ENCODE measurements at regions of chr17 and their contacts with region 1.

Region 1: DNA sequence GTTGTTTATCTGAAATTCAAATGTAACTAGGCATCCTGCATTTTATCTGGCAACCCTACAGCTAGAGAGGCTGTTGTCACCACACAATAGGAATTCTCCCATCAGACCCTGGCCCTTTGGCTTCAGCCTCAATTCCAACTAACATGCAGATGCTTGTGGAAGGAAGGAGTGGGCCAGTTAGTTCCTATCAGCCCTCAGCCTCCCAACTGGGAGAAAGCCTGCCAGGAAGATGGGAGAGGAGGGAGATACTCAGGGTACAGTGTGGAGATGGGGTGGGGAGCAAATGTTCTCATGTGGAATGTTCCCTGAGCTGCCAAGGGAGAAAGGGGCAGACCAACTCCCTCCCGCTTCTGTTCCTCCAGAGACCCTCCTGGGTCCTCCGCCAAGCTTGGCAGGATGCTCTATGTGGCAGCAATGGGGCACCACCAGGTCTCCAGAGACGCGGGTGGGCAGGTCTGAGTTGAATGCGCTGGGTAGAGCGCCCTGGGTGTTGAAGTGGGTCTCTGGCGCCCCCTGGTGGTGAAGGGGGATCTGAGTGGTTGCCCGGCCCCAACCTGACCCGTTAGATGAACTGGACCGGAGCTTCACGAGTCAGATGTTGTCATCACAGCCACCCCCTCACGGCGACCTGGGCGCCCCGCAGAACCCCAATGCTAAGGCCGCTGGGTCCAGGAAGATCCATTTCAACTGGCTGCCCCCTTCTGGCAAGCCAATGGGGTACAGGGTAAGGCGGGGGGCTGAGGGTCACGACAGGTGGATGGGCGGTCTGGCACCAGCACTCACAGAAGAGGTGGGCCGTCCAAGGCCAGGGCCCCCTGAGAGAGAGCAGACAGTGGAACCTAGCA is 15.2 kb downstream of the GALK1 start:
- DNase-seq: peak; percentile 59 to 91 (median 83)
- ATAC-seq: peak; percentile 60 to 70 (median 60)
- H3K4me3 ChIP-seq: no peak overlapping the region
- H3K4me3 Mint-ChIP-seq: no peak overlapping the region
- H3K27ac ChIP-seq: no peak overlapping the region
- H3K27ac Mint-ChIP-seq: no peak overlapping the region
- H3K4me1 ChIP-seq: peaks cover 0 to 34% of the 10 kb centered on the region in 2 experiments
- H3K4me1 Mint-ChIP-seq: peaks cover 16 to 21% (median 18%) of the 10 kb centered on the region in 3 donors
- H3K27me3 ChIP-seq: peaks cover 0 to 4% of the 10 kb centered on the region in 2 experiments
- H3K27me3 Mint-ChIP-seq: peaks cover 0 to 3% of the 10 kb centered on the region in 2 donors

Region 2: DNA sequence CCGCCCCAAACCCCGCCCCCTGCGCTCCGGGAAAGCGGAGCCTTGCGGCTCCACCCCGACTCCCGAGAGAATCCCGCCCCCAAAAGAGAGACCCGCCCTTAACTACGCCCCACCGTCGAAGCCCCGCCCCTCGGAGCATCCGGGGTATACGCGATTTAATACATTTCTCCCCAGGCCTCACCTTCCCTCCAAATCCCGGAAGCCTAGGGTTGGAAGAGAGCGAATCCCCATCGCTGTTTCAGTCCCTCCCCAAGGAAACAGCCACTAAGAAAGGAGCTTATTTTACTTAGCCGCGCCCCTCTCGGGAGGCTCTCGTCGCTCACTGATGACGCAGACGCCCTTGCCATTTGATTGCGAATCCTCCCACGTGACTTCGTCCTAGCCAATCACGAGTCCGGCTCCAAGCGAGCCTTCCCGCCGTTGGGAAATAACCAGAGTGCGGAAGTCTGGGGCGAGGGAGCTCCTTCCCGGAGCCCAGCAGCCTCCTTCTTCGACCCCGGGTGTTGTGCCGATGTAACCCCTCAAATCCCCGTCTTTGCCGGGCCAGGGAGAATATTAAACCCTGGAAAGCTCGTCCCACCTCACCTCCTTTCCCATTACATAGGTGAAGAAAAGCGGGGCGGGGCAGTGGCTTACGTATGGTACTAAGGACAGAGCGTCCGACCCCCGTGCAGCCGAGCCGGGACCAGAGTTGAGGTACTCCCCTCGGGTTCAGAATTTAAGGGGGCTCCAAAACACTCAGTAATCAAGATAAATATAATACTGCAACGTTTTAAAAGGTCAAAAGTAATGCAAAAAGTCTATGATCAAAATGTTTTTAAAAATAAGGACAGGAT is 876.5 kb before region 1 on chr17:
- CTCF ChIA-PET with region 1: interaction called in 1 of 2 experiments, 12 read pairs
- POLR2A ChIA-PET with region 1: no interaction called
- DNase-seq: peak; percentile 96 to 100 (median 99)
- ATAC-seq: peak; percentile 93 to 94 (median 94)
- H3K4me3 ChIP-seq: peak overlapping the region; percentile 76 to 91
- H3K4me3 Mint-ChIP-seq: peak overlapping the region; percentile 80 to 92 (median 88)
- H3K27ac ChIP-seq: peak overlapping the region; percentile 89
- H3K27ac Mint-ChIP-seq: peak overlapping the region; percentile 95 to 97
- H3K4me1 ChIP-seq: peaks cover 4 to 21% of the 10 kb centered on the region in 2 experiments
- H3K4me1 Mint-ChIP-seq: peaks cover 16 to 30% (median 23%) of the 10 kb centered on the region in 3 donors
- H3K27me3 ChIP-seq: peaks cover 0 to 5% of the 10 kb centered on the region in 2 experiments
- H3K27me3 Mint-ChIP-seq: no peaks in the 10 kb centered on the region

Region 3: GRCh38 chr17:75159191-75160031 is 590.4 kb before region 1 on chr17:
- CTCF ChIA-PET with region 1: no interaction called
- POLR2A ChIA-PET with region 1: no interaction called
- DNase-seq: no peak
- ATAC-seq: no peak
- H3K4me3 ChIP-seq: no peak overlapping the region
- H3K4me3 Mint-ChIP-seq: no peak overlapping the region
- H3K27ac ChIP-seq: no peak overlapping the region
- H3K27ac Mint-ChIP-seq: no peak overlapping the region
- H3K4me1 ChIP-seq: peaks cover 7 to 11% of the 10 kb centered on the region in 2 experiments
- H3K4me1 Mint-ChIP-seq: peaks cover 10 to 15% (median 15%) of the 10 kb centered on the region in 3 donors
- H3K27me3 ChIP-seq: no peaks in the 10 kb centered on the region
- H3K27me3 Mint-ChIP-seq: no peaks in the 10 kb centered on the region

Region 4: DNA sequence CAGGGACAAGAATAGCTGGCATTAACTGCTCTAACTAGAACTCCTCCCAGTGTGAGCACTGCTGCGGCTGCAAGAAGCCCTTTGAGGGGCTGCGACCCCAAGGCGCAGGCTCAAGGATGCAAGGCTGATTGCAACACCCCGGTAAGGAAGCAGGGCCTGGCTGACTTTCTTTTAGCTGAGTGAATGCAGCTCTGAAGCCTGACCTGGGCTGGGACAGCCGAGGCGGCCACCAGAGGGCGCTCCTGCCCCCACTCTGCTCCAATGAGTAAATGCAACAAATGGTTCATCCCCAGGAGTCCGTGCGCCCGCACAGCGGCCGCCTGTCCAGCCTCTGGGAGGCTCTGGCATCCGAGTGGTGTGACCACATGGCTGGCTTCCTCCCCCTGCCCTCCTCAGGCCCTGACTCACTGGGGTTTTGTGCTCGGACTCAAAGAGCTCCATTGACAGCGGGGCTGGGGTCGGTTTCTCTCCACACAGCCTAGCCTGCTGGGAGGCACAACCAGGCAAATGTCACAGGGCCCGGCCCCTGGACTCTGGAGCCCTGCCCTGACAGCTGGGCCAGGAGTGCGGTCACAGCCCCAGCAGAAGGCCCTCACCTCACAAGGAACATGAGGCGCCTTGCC is 116.8 kb before region 1 on chr17 and contains the start of gene SMIM5:
- CTCF ChIA-PET with region 1: interaction called, 7 to 49 read pairs
- POLR2A ChIA-PET with region 1: no interaction called
- DNase-seq: peak; percentile 57 to 89 (median 76)
- ATAC-seq: peak; percentile 77 to 84 (median 79)
- H3K4me3 ChIP-seq: no peak within 1 kb of the TSS
- H3K4me3 Mint-ChIP-seq: no peak within 1 kb of the TSS
- H3K27ac ChIP-seq: no peak within 1 kb of the TSS
- H3K27ac Mint-ChIP-seq: no peak within 1 kb of the TSS
- H3K4me1 ChIP-seq: peaks cover 2 to 16% of the 10 kb centered on the region in 2 experiments
- H3K4me1 Mint-ChIP-seq: peaks cover 8 to 12% (median 9%) of the 10 kb centered on the region in 3 donors
- H3K27me3 ChIP-seq: no peaks in the 10 kb centered on the region
- H3K27me3 Mint-ChIP-seq: no peaks in the 10 kb centered on the region
- total RNA-seq, gene SMIM5: 0.35 to 2.2 (median 0.82) TPM

Region 5: DNA sequence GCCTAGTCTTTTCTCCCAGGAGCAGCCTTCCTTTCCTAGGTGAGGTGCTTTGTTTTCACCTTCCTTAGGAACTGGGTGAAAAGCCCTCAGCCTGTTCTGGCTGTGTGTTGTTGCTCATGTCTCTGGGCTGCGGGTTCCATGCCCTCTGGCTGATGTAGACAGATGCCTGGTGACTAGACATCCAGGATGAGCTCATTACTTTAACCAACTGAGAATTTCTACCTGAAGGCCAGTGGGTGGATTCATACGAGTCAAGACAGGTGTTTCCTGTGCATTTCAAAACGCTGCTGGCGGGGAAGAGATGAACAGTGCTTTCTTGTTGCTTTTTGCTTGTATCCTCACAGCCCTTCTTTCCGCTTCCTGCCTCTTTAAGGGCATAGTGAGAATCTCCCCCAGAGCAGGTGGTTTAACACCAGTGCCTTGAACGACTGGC is 60.3 kb before region 1 on chr17:
- CTCF ChIA-PET with region 1: interaction called, 4 to 10 read pairs
- POLR2A ChIA-PET with region 1: no interaction called
- DNase-seq: peak; percentile 13 to 77 (median 59)
- ATAC-seq: peak; percentile 91 to 97 (median 96)
- H3K4me3 ChIP-seq: no peak overlapping the region
- H3K4me3 Mint-ChIP-seq: peak overlapping the region in 2 of 3 donors; percentile 39 to 78
- H3K27ac ChIP-seq: peak overlapping the region; percentile 70
- H3K27ac Mint-ChIP-seq: peak overlapping the region; percentile 87 to 89
- H3K4me1 ChIP-seq: peaks cover 32 to 47% of the 10 kb centered on the region in 2 experiments
- H3K4me1 Mint-ChIP-seq: peaks cover 55 to 61% (median 56%) of the 10 kb centered on the region in 3 donors
- H3K27me3 ChIP-seq: no peaks in the 10 kb centered on the region
- H3K27me3 Mint-ChIP-seq: no peaks in the 10 kb centered on the region

Region 6: DNA sequence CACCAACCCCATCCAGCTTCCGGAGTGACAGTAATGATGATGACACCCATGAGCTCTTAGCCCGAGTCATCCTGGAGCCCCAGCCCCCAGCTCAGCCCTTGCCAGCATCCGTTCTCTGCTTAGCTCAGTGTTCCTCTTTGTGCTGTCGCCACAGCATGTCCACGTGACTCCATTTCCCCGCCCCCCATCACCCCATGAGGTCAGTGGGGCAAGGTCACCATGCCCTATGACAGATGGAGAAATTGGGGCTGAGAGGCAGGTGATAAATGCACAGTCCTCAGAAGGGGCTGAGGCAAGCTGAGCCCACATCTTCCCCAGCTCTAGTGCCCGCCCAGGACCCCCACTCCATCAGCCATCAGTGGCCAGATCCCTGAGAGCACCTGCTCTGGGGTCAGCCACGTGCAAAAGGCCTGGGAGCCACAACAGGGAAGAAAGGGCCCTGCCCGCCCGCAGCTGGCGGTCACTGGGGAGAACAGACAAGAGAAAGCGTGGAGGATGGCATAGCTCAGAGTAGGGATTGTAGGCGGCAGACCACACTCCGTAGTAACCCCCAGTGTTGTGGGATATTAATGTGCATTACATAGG is 11.5 kb before region 1 on chr17:
- CTCF ChIA-PET with region 1: no interaction called
- POLR2A ChIA-PET with region 1: no interaction called
- DNase-seq: peak in 3 of 35 experiments; percentile 10 to 51 (median 13)
- ATAC-seq: no peak
- H3K4me3 ChIP-seq: no peak overlapping the region
- H3K4me3 Mint-ChIP-seq: no peak overlapping the region
- H3K27ac ChIP-seq: no peak overlapping the region
- H3K27ac Mint-ChIP-seq: no peak overlapping the region
- H3K4me1 ChIP-seq: no peaks in the 10 kb centered on the region
- H3K4me1 Mint-ChIP-seq: peaks cover 0 to 5% (median 3%) of the 10 kb centered on the region in 3 donors
- H3K27me3 ChIP-seq: peaks cover 0 to 7% of the 10 kb centered on the region in 2 experiments
- H3K27me3 Mint-ChIP-seq: no peaks in the 10 kb centered on the region

Region 7: GRCh38 chr17:75784473-75785015 is 34.8 kb after region 1 on chr17 and contains the start of gene UNK:
- CTCF ChIA-PET with region 1: interaction called, 3 to 10 read pairs
- POLR2A ChIA-PET with region 1: interaction called in 1 of 2 experiments, 7 read pairs
- DNase-seq: peak; percentile 89 to 98 (median 95)
- ATAC-seq: peak; percentile 75 to 82 (median 79)
- H3K4me3 ChIP-seq: peak within 1 kb of the TSS; percentile 75 to 82
- H3K4me3 Mint-ChIP-seq: peak within 1 kb of the TSS; percentile 81 to 91 (median 87)
- H3K27ac ChIP-seq: peak within 1 kb of the TSS; percentile 100
- H3K27ac Mint-ChIP-seq: peak within 1 kb of the TSS; percentile 99 to 100
- H3K4me1 ChIP-seq: peaks cover 27 to 42% of the 10 kb centered on the region in 2 experiments
- H3K4me1 Mint-ChIP-seq: peaks cover 50 to 60% (median 57%) of the 10 kb centered on the region in 3 donors
- H3K27me3 ChIP-seq: no peaks in the 10 kb centered on the region
- H3K27me3 Mint-ChIP-seq: peaks cover 0 to 1% of the 10 kb centered on the region in 2 donors
- total RNA-seq, gene UNK: 37.1 to 50.3 (median 39.2) TPM

Measured in T-cell (primary cell).